Pancreas (tissue), 10 donors: ENCODE measurements at regions of chr10 and their contacts with region 1.

Region 1: GRCh38 chr10:35124540-35124939 is 2.1 kb upstream of the CREM start:
- DNase-seq: no peak
- ATAC-seq: no peak
- H3K4me3 ChIP-seq: no peak overlapping the region
- H3K27ac ChIP-seq: no peak overlapping the region
- H3K4me1 ChIP-seq: peaks cover 0 to 13% (median 8%) of the 10 kb centered on the region in 3 donors
- H3K27me3 ChIP-seq: no peaks in the 10 kb centered on the region
- CTCF ChIP-seq: no peak

Region 2: GRCh38 chr10:35203744-35204143 is 79.2 kb after region 1 on chr10:
- intact Hi-C with region 1: loop called in 1 of 3 experiments (anchors 5 kb)
- DNase-seq: no peak
- ATAC-seq: no peak
- H3K4me3 ChIP-seq: no peak overlapping the region
- H3K27ac ChIP-seq: no peak overlapping the region
- H3K4me1 ChIP-seq: no peaks in the 10 kb centered on the region
- H3K27me3 ChIP-seq: no peaks in the 10 kb centered on the region
- CTCF ChIP-seq: no peak

Region 3: GRCh38 chr10:35218339-35218955 is 93.9 kb after region 1 on chr10:
- intact Hi-C with region 1: loop called in 2 of 3 experiments (anchors 5 to 10 kb)
- DNase-seq: peak in 5 of 6 donors; percentile 47 to 83 (median 75)
- ATAC-seq: peak; percentile 77 to 93 (median 88)
- H3K4me3 ChIP-seq: no peak overlapping the region
- H3K27ac ChIP-seq: no peak overlapping the region
- H3K4me1 ChIP-seq: no peaks in the 10 kb centered on the region
- H3K27me3 ChIP-seq: no peaks in the 10 kb centered on the region
- CTCF ChIP-seq: peak; percentile 49 to 88 (median 75)